GM12878 (cell line): ENCODE measurements at regions of chr1 and their contacts with region 1.

Region 1: GRCh38 chr1:70247768-70248167 is 26.6 kb downstream of the SRSF11 start:
- DNase-seq: no peak
- ATAC-seq: no peak
- H3K4me3 ChIP-seq: no peak overlapping the region
- H3K27ac ChIP-seq: no peak overlapping the region
- H3K4me1 ChIP-seq: no peaks in the 10 kb centered on the region
- H3K27me3 ChIP-seq: no peaks in the 10 kb centered on the region
- CTCF ChIP-seq: no peak
- EP300 ChIP-seq: no peak
- POLR2A ChIP-seq: no peak
- RAD21 ChIP-seq: no peak

Region 2: GRCh38 chr1:70354332-70355110 is 106.8 kb after region 1 on chr1 and contains the start of gene ANKRD13C:
- CTCF ChIA-PET with region 1: no interaction called
- POLR2A ChIA-PET with region 1: no interaction called
- RAD21 ChIA-PET with region 1: no interaction called
- SMC1A ChIA-PET with region 1: no interaction called
- in situ Hi-C with region 1: no loop called
- intact Hi-C with region 1: no loop called
- DNase-seq: peak; percentile 83
- ATAC-seq: peak; percentile 89
- H3K4me3 ChIP-seq: peak within 1 kb of the TSS; percentile 88
- H3K27ac ChIP-seq: peak within 1 kb of the TSS; percentile 90
- H3K4me1 ChIP-seq: peaks cover 12% of the 10 kb centered on the region; the same call in 1 of the 2 replicates
- H3K27me3 ChIP-seq: no peaks in the 10 kb centered on the region
- CTCF ChIP-seq: peak in 2 of 3 experiments; percentile 7 to 26; a peak in 1 of 6 replicates
- EP300 ChIP-seq: 0 out of 4 replicates have a peak, but pooled peaks of 1 of the 2 experiments have one; percentile 11
- POLR2A ChIP-seq: peak; percentile 97
- RAD21 ChIP-seq: no peak
- polyA plus RNA-seq, gene ANKRD13C: 3.7 to 5.1 TPM

Region 3: GRCh38 chr1:70487910-70488665 is 240.3 kb after region 1 on chr1:
- CTCF ChIA-PET with region 1: no interaction called
- POLR2A ChIA-PET with region 1: no interaction called
- RAD21 ChIA-PET with region 1: no interaction called
- SMC1A ChIA-PET with region 1: no interaction called
- in situ Hi-C with region 1: no loop called
- intact Hi-C with region 1: loop called (anchors 5 kb)
- DNase-seq: peak; percentile 16
- ATAC-seq: peak; percentile 89
- H3K4me3 ChIP-seq: no peak overlapping the region
- H3K27ac ChIP-seq: no peak overlapping the region
- H3K4me1 ChIP-seq: no peaks in the 10 kb centered on the region
- H3K27me3 ChIP-seq: no peaks in the 10 kb centered on the region
- CTCF ChIP-seq: peak; percentile 74 to 89 (median 81)
- EP300 ChIP-seq: no peak
- POLR2A ChIP-seq: no peak
- RAD21 ChIP-seq: peak; percentile 94